ENCODE measurements at regions of chr12 and their contacts with region 1.

Region 1: DNA sequence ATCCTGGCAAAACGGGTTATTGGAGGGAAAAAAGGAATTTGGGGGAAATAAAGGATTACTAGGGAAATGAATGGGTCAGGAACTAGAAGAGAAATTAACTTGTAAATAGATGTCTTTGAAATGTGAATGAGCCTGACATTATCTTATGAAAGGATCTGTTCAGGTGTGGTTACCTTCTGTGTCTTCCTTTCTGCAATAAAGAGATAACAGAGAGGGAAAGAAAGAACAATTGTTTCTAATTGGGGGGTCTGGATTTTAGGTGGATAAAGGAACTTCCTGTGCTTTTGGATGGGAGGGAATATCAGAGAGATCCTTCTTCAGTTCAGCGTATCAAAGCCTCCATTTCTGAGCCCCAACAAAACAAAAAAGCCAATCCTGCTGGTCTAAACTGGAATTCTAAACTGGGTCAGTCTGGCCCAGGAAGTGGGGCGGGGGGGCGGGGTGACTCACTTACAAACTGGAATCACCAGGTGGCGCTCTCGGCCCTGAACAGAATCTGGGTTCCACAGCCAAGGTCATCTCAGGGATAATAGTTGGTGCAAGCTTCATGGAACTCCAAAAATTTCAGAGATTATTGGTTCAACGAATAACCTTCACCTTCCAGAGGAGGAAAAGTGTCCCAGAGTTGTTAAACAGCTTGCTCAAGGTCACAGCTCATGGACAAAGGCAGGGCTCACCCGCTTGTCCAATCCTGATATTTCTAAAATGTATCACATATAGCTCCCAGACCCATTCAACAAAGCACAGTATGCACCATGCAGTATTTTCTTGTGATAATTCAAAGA is 15.2 kb upstream of the PEBP1 start:
- DNase-seq: peak; percentile 72
- H3K4me3 Mint-ChIP-seq: no peak overlapping the region
- H3K27ac Mint-ChIP-seq: peak overlapping the region; percentile 47
- H3K4me1 Mint-ChIP-seq: peaks cover 7% of the 10 kb centered on the region
- H3K27me3 Mint-ChIP-seq: no peaks in the 10 kb centered on the region

Region 2: GRCh38 chr12:117968826-117969659 is 151.7 kb before region 1 on chr12 and contains the start of gene KSR2:
- CTCF ChIA-PET with region 1: no interaction called
- POLR2A ChIA-PET with region 1: no interaction called
- DNase-seq: peak; percentile 36
- H3K4me3 Mint-ChIP-seq: peak within 1 kb of the TSS; percentile 68
- H3K27ac Mint-ChIP-seq: no peak within 1 kb of the TSS
- H3K4me1 Mint-ChIP-seq: peaks cover 6% of the 10 kb centered on the region
- H3K27me3 Mint-ChIP-seq: peaks cover 53% of the 10 kb centered on the region
- total RNA-seq, gene KSR2: not detected

Region 3: GRCh38 chr12:118094039-118094438 is 26.7 kb before region 1 on chr12:
- CTCF ChIA-PET with region 1: no interaction called
- POLR2A ChIA-PET with region 1: no interaction called
- DNase-seq: no peak
- H3K4me3 Mint-ChIP-seq: no peak overlapping the region
- H3K27ac Mint-ChIP-seq: no peak overlapping the region
- H3K4me1 Mint-ChIP-seq: no peaks in the 10 kb centered on the region
- H3K27me3 Mint-ChIP-seq: no peaks in the 10 kb centered on the region

Region 4: DNA sequence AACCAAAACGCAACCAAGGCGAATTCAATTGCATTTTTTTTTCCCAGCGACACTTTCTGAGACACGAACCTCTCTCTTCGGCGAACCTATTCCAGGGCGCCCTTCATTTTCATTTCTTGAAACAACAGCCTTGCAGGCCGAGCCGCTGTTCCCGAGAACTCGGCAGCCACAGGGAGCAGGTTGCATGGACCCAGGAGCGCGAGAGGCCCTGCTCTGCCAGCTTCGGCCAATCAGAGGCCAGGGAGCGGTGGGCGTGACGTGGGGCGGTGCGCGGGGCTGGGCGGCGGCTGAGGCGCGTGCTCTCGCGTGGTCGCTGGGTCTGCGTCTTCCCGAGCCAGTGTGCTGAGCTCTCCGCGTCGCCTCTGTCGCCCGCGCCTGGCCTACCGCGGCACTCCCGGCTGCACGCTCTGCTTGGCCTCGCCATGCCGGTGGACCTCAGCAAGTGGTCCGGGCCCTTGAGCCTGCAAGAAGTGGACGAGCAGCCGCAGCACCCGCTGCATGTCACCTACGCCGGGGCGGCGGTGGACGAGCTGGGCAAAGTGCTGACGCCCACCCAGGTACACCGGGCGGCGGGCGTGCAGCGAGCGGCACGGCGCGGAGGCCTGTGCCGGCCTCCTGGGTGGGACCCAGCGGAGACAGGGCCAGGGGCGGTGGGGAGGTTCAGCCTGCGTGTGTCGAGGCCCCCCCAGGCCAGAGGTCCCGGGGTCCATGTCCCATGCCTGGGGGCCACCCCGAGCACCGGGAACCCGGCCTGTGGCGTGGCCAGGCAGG is 15.2 kb after region 1 on chr12 and contains the start of gene PEBP1:
- CTCF ChIA-PET with region 1: interaction called, 27 read pairs
- POLR2A ChIA-PET with region 1: interaction called, 3 read pairs
- DNase-seq: peak; percentile 94
- H3K4me3 Mint-ChIP-seq: peak within 1 kb of the TSS; percentile 82
- H3K27ac Mint-ChIP-seq: peak within 1 kb of the TSS; percentile 84
- H3K4me1 Mint-ChIP-seq: peaks cover 33% of the 10 kb centered on the region
- H3K27me3 Mint-ChIP-seq: no peaks in the 10 kb centered on the region
- total RNA-seq, gene PEBP1: 75.5 to 76.7 TPM

Region 5: DNA sequence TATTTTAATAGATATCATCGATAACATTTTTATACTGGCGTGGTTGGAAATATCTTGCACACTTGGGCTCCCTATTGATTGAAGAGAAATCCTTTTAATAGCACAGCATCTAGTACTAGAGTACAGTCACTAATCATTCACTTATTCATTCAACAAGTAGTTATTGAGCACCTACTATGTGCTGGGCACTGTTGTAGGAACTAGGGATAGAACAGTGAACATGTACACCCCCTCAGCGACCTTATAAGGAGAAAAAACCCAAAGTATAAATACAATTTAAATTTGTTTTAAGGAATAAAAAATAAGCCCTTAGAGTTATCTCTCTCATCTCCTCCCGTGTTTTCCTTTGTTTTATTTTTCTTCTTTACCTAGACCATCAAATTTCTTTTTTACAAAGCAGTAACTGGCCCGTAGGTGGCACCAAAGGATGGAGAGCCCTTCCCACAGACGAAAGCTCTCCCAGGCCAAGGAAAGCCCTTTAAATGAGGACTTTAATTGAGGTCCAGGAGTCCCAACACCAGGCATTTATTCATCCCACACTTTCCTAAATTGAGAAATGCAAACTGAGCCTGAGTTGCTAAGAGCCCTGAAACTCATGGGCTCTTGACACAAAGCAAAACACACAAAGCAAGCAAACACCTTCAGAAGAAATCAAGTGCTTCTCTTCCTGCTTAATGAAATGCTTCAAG is 44.2 kb after region 1 on chr12:
- CTCF ChIA-PET with region 1: interaction called, 16 read pairs
- POLR2A ChIA-PET with region 1: interaction called, 3 read pairs
- DNase-seq: no peak
- H3K4me3 Mint-ChIP-seq: no peak overlapping the region
- H3K27ac Mint-ChIP-seq: no peak overlapping the region
- H3K4me1 Mint-ChIP-seq: peaks cover 22% of the 10 kb centered on the region
- H3K27me3 Mint-ChIP-seq: no peaks in the 10 kb centered on the region

Region 6: DNA sequence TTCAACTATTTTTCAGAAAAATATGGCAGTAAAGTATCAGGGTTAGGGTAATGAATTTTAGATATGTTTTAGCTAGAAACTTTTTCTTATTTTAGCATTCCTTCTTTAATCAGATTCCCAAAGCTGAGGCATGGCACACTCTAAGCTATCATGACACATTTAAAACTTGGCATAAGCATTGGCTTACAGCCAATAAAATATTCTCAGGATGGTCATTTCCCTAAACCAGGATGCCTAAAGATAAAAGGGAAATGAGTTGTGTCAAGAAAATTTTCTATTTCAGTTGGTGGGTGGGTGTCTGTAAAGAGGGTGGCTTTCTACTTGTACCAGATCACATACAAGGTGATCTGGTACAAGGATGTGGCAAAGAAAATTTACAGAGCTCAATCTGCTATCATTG is 62.9 kb after region 1 on chr12:
- CTCF ChIA-PET with region 1: interaction called, 12 read pairs
- POLR2A ChIA-PET with region 1: no interaction called
- DNase-seq: no peak
- H3K4me3 Mint-ChIP-seq: no peak overlapping the region
- H3K27ac Mint-ChIP-seq: no peak overlapping the region
- H3K4me1 Mint-ChIP-seq: peaks cover 6% of the 10 kb centered on the region
- H3K27me3 Mint-ChIP-seq: no peaks in the 10 kb centered on the region